Activated naive CD4-positive, alpha-beta T cell treated with anti-CD3 and anti-CD28 coated beads for 36 hours (primary cell): ENCODE measurements at regions of chr14 and their contacts with region 1.

Region 1: DNA sequence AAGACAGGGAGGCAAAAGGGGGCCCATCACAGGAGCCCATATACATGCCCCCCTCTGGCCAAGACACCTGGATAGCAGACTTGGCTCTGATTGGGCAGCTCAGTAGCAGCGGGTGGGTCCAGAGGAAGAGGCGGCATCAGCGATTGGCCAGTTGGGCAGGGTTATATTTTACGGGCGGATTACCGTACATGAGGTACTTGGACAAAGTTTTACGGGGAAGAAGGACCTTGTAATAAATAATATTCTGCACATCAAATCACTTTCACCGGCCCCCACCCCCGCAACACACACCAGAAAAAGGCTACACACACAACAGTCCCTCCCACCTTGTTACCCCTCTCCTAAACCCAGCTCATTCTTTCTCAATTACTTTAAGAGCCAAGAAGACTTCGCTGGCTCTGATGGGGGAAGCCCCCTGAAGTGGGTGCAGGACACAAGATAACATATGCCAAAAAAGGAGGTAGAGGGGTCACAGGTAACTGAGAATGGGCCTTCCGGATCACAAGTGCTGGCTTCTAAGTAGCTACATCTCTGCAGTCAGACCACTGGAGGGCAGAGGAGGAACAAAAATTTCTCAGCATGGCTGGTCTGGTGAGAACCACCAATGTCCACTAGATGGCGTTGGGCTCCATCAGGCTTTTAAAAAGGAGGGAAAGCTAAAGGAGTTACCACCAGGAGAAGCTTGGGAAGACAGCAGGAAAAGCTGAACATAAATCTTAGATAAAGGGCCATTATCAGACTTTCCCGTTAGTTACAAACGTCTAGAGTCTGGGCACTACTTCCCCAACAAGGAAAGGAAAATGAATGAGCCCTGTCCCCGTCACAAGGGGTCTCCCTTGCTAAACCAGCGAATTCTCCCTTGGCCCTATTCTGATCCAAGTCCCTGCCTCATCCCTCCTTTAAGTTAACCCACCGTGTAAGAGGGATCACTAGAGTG is 11.4 kb upstream of the CDH24 start:
- DNase-seq: peak; percentile 88
- H3K4me3 Mint-ChIP-seq: peak overlapping the region; percentile 15
- H3K27ac Mint-ChIP-seq: peak overlapping the region; percentile 30
- H3K4me1 Mint-ChIP-seq: peaks cover 41% of the 10 kb centered on the region
- H3K27me3 Mint-ChIP-seq: no peaks in the 10 kb centered on the region

Region 2: GRCh38 chr14:22536853-22537338 is 531.8 kb before region 1 on chr14:
- CTCF ChIA-PET with region 1: no interaction called
- intact Hi-C with region 1: no loop called
- DNase-seq: peak; percentile 95
- H3K4me3 Mint-ChIP-seq: peak overlapping the region; percentile 67
- H3K27ac Mint-ChIP-seq: peak overlapping the region; percentile 98
- H3K4me1 Mint-ChIP-seq: peaks cover 93% of the 10 kb centered on the region
- H3K27me3 Mint-ChIP-seq: no peaks in the 10 kb centered on the region

Region 3: DNA sequence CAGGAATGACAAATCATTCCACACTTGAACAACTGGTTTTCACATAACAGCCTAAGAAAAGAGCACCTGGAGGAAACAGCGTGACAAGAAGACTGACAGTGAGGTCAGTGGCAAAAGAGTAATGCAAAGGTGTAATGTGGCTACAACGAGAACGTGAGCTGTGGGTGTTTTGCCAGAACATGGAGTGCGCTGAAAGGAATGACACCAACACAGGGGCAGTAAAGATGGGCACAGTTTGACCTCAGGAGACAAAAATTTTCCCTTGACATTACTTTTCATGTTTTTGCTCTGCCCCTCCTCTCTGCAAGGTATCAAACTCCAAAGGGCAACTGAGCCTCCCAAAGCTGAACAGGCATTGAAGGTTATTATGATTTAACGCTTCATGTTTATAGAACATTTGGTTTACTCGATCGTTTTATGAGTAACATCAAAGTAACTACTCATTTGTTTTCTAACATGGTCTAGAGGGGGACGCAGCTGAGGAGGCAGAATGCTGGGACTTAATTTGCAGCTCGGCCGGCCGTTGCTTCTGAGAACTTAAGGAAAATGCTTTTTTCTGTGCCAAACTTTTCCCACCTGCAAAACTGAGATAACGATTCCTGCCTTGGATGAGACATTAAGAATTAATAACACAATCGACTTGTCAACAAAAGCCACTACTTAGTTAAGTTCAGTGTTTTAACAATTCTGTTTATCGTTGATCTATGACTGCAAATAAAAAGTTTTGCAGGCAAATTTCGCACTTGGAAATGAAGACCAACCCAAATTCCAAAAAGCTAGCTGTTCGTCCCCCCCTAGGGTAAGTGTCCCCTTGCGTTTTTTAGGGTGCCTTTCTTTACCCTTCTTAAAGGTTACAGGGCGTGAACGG is 112.8 kb before region 1 on chr14:
- CTCF ChIA-PET with region 1: interaction called, 25 read pairs
- intact Hi-C with region 1: no loop called
- DNase-seq: no peak
- H3K4me3 Mint-ChIP-seq: peak overlapping the region; percentile 89
- H3K27ac Mint-ChIP-seq: peak overlapping the region; percentile 84
- H3K4me1 Mint-ChIP-seq: peaks cover 22% of the 10 kb centered on the region
- H3K27me3 Mint-ChIP-seq: no peaks in the 10 kb centered on the region

Region 4: DNA sequence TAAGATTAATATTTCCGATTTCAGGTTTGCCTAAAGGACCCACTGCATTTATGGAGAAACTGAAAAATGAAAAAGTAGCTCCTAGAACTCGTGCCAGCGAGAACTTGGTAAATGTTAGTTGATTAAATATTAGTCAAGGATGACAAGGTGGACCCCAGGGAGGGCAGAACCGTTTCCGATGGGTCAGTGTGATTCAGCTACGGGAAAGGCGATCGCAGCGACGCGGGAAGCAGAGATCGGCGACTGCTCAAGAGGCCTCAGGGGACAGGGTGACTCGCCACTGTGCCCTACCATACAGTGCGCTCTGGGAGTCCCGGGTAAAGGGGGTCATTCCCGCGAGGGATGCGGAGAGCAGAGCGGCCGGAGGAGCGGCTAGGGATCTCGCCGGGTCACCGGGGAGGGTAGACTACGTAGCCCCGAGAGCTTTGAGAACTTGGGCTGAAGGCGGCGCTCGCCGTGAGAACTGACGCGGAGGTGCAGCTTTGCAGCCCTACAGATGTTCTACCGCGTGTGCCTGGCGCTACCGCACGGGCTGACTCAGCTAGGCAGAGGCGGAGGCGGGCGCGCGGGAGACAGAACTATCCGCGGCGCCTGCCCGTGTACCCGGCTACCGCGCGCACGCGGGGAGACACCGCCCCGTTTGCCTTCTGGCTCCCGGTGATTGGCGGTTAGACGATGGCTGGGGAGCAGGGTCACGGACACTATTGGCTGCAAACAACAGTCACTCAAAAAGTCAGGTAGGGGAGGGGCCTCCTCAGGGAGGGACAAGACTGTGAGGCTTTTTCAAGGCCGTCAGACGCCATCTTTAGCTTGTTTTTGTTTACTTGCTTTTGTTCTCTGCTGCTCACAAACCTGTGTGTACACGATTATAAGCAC is 62.0 kb before region 1 on chr14:
- CTCF ChIA-PET with region 1: interaction called, 22 read pairs
- intact Hi-C with region 1: no loop called
- DNase-seq: peak; percentile 99
- H3K4me3 Mint-ChIP-seq: peak overlapping the region; percentile 96
- H3K27ac Mint-ChIP-seq: peak overlapping the region; percentile 98
- H3K4me1 Mint-ChIP-seq: peaks cover 36% of the 10 kb centered on the region
- H3K27me3 Mint-ChIP-seq: no peaks in the 10 kb centered on the region

Region 5: DNA sequence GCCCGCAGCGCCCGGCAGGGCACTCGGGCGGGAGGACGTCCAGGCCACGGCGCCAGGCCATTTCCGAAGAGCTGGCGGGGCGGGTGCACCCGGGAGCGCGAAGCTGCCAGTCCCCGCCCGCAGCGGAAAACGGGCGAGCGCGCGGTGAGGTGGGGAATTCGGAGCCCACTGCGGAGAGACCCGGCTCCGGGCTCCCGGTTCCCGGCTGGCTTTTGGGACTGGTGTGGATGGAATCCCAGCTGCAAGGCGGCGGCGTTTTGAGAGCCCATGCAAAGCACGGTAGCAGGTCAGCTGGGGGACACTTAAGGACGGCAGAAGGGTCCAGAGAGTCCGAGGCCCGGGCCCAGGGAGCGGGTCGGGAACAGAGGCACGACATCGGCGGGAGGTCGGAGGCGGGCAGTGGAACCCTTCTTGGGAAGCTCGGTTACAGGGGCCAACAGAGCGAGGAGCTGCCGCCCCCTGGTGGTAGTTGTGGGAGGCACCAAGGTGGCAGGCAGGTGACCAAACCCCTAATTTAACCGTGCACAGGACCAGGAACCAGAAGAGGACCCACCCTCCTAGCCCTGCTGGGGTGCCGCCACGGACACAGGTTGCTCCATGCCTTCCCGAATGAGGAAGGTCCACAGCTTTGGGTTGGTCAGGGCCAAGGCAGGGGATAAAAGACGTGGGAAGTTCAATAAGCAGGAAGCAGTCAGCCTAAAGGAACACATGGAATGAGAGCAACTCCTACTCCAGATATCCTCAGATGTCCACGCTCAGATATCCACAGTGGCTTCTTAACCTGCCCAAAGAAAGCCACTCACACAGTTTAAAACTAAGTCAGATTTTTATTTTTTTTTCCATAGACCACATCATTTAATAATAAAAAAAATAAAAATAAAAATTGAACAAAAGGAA is 10.7 kb before region 1 on chr14:
- CTCF ChIA-PET with region 1: interaction called, 38 read pairs
- intact Hi-C with region 1: no loop called
- DNase-seq: peak; percentile 92
- H3K4me3 Mint-ChIP-seq: peak overlapping the region; percentile 80
- H3K27ac Mint-ChIP-seq: no peak overlapping the region
- H3K4me1 Mint-ChIP-seq: peaks cover 16% of the 10 kb centered on the region
- H3K27me3 Mint-ChIP-seq: peaks cover 5% of the 10 kb centered on the region

Region 6: GRCh38 chr14:23120541-23121251 is 52.0 kb after region 1 on chr14:
- CTCF ChIA-PET with region 1: interaction called, 30 read pairs
- intact Hi-C with region 1: loop called (anchors 1 kb)
- DNase-seq: peak; percentile 94
- H3K4me3 Mint-ChIP-seq: no peak overlapping the region
- H3K27ac Mint-ChIP-seq: peak overlapping the region; percentile 87
- H3K4me1 Mint-ChIP-seq: peaks cover 41% of the 10 kb centered on the region
- H3K27me3 Mint-ChIP-seq: no peaks in the 10 kb centered on the region

Region 7: GRCh38 chr14:23294734-23295561 is 226.2 kb after region 1 on chr14:
- CTCF ChIA-PET with region 1: interaction called, 4 read pairs
- intact Hi-C with region 1: loop called (anchors 1 kb)
- DNase-seq: peak; percentile 61
- H3K4me3 Mint-ChIP-seq: no peak overlapping the region
- H3K27ac Mint-ChIP-seq: no peak overlapping the region
- H3K4me1 Mint-ChIP-seq: peaks cover 14% of the 10 kb centered on the region
- H3K27me3 Mint-ChIP-seq: no peaks in the 10 kb centered on the region